Spleen (tissue), 13 donors: ENCODE measurements at regions of chr18 and their contacts with region 1.

Region 1: GRCh38 chr18:9150121-9150520 is 13.5 kb downstream of the ANKRD12 start:
- DNase-seq: no peak
- H3K4me3 ChIP-seq: no peak overlapping the region
- H3K27ac ChIP-seq: peak overlapping the region in 3 of 8 donors; percentile 5 to 36 (median 6)
- H3K4me1 ChIP-seq: peaks cover 58 to 100% (median 99%) of the 10 kb centered on the region in 6 donors
- H3K27me3 ChIP-seq: no peaks in the 10 kb centered on the region
- CTCF ChIP-seq: no peak
- POLR2A ChIP-seq: no peak

Region 2: GRCh38 chr18:9069601-9070000 is 80.5 kb before region 1 on chr18:
- intact Hi-C with region 1: loop called (anchors 2 kb)
- DNase-seq: no peak
- H3K4me3 ChIP-seq: no peak overlapping the region
- H3K27ac ChIP-seq: peak overlapping the region in 4 of 8 donors; percentile 31 to 66 (median 37)
- H3K4me1 ChIP-seq: peaks cover 3 to 31% (median 25%) of the 10 kb centered on the region in 6 donors
- H3K27me3 ChIP-seq: no peaks in the 10 kb centered on the region
- CTCF ChIP-seq: no peak
- POLR2A ChIP-seq: no peak

Region 3: DNA sequence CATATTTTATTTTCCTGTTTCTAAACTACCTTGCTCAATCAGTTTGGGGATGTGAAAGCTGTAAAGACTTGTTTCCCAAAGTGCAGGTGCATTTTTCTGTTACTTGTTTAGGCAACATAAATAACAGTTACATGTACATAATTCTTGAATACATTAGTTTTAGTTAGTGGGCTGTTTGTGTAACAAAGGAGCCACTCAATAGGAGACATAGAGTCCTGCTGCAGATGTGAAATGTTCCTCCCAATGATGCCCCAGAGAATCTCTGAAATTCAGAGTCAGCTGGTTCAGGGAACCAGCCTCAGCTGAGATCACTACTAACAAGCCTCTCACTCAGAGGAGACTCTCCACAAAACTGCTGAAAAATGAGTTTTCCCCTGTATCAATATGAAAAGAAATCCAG is 92.9 kb after region 1 on chr18:
- intact Hi-C with region 1: no loop called
- DNase-seq: no peak
- H3K4me3 ChIP-seq: no peak overlapping the region
- H3K27ac ChIP-seq: peak overlapping the region in 6 of 8 donors; percentile 16 to 52 (median 37)
- H3K4me1 ChIP-seq: peaks cover 0 to 18% (median 0%) of the 10 kb centered on the region in 6 donors
- H3K27me3 ChIP-seq: no peaks in the 10 kb centered on the region
- CTCF ChIP-seq: no peak
- POLR2A ChIP-seq: no peak